Posterior cingulate gyrus (tissue), 11 donors: ENCODE measurements at regions of chrX and their contacts with region 1.

Region 1: GRCh38 chrX:41558531-41558930 is 111.4 kb downstream of the NYX start:
- DNase-seq: no peak

Region 2: DNA sequence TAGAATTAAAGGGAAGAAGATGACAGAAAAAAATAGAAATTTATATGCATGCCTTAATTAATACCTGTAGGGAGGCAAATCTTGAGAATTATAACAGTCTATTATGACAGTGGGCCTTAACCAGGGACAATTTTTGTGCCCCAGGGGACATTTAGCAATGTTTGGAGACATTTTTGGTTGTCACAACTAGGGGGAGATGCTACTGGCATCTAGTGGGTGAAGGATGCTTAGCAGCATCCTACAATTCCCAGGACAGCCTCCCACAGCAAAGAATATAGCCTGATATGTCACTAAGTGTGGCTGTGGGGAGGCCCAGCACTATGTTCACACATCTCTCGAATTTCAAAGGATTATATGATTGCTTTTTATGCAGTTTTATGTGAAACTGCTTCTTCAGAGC is 176.0 kb after region 1 on chrX:
- intact Hi-C with region 1: loop called (anchors 10 kb)
- DNase-seq: no peak

Region 3: GRCh38 chrX:41759817-41760216 is 201.3 kb after region 1 on chrX:
- intact Hi-C with region 1: loop called (anchors 10 kb)
- DNase-seq: no peak

Region 4: GRCh38 chrX:41808047-41808446 is 249.5 kb after region 1 on chrX:
- intact Hi-C with region 1: no loop called
- DNase-seq: no peak